K562 (cell line): ENCODE measurements at regions of chr19 and their contacts with region 1.

Region 1: GRCh38 chr19:37519890-37520289 is 13.2 kb downstream of the ZNF793 start:
- DNase-seq: no peak
- ATAC-seq: no peak
- H3K4me3 ChIP-seq: no peak overlapping the region
- H3K27ac ChIP-seq: no peak overlapping the region
- H3K4me1 ChIP-seq: no peaks in the 10 kb centered on the region
- H3K27me3 ChIP-seq: no peaks in the 10 kb centered on the region
- CTCF ChIP-seq: no peak
- EP300 ChIP-seq: no peak
- POLR2A ChIP-seq: no peak
- RAD21 ChIP-seq: no peak

Region 2: DNA sequence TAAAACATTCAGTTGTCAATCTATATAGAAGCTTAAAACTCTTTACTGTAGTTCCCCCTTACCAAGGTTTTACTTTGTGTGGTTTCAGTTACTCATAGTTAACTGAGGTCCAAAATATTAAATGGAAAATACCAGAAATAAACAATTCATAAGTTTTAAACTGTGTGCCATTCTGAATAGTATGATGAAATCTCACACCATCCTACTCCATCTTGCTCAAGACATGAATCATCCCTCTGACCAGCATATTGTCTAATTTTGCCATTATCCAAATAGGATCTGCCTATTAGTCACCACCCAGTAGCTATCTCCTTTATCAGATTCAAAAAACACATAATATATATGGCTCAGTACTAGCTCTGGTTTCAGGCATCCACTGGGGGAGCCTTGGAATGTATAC is 52.3 kb after region 1 on chr19:
- CTCF ChIA-PET with region 1: no interaction called
- POLR2A ChIA-PET with region 1: no interaction called
- in situ Hi-C with region 1: loop called (anchors 5 kb)
- intact Hi-C with region 1: no loop called
- DNase-seq: no peak
- ATAC-seq: no peak
- H3K4me3 ChIP-seq: no peak overlapping the region
- H3K27ac ChIP-seq: no peak overlapping the region
- H3K4me1 ChIP-seq: no peaks in the 10 kb centered on the region
- H3K27me3 ChIP-seq: no peaks in the 10 kb centered on the region
- CTCF ChIP-seq: no peak
- EP300 ChIP-seq: no peak
- POLR2A ChIP-seq: no peak
- RAD21 ChIP-seq: no peak